Activated CD8-positive, alpha-beta T cell treated with anti-CD3 and anti-CD28 coated beads, Interleukin-2, amount 10 ng/mL, durations not matched to agents 7 days and 5 days (primary cell): ENCODE measurements at regions of chr9 and their contacts with region 1.

Region 1: DNA sequence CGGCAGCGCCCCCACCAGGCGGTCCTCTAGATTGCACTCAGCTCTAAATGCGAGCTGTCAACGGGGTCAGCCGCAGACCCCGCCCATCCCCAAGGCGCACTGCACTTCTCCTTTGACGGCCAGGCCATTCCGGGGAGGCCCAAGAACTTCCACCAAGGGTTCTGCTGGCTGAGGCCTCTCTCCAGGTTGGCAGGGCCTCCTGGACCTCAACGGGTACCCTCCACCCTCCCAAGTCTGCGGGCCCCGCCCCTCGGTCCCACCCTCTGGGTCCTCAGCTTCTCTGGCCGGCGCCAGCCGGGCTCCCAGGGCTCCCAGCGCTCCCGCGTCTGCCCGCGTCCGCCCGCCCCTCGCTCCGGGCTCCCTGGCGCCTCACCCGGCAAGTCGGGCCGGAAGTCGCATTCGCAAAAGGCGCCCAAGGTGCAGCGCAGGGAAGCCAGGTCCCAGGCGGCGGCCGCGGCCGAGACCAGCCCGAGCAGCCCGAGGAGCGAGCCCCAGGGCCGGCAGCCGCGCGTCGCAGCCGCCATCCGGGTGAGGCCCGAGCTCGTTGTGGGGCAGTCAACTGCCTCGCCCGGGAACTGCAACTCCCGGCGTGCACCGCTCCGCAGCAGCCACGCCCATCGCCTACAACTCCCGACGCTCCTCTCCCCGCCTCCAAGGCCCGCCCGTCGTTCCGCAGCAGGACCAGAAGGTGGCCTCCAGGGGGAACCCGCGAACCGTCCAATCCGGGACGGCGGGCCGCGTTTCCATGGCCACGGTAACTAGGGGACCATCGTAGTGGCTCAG is at the start of gene TOR2A:
- DNase-seq: peak; percentile 99
- ATAC-seq: peak; percentile 93
- H3K4me3 Mint-ChIP-seq: peak within 1 kb of the TSS; percentile 73
- H3K27ac Mint-ChIP-seq: peak within 1 kb of the TSS; percentile 86
- H3K4me1 Mint-ChIP-seq: peaks cover 25% of the 10 kb centered on the region
- H3K27me3 Mint-ChIP-seq: no peaks in the 10 kb centered on the region
- total RNA-seq, gene TOR2A: 27.0 to 29.1 TPM

Region 2: GRCh38 chr9:127555768-127556397 is 179.1 kb before region 1 on chr9:
- CTCF ChIA-PET with region 1: interaction called, 11 read pairs
- POLR2A ChIA-PET with region 1: interaction called, 3 read pairs
- DNase-seq: peak; percentile 93
- ATAC-seq: peak; percentile 89
- H3K4me3 Mint-ChIP-seq: peak overlapping the region; percentile 76
- H3K27ac Mint-ChIP-seq: peak overlapping the region; percentile 97
- H3K4me1 Mint-ChIP-seq: peaks cover 88% of the 10 kb centered on the region
- H3K27me3 Mint-ChIP-seq: no peaks in the 10 kb centered on the region

Region 3: GRCh38 chr9:127586537-127586936 is 148.4 kb before region 1 on chr9:
- CTCF ChIA-PET with region 1: interaction called, 51 read pairs
- POLR2A ChIA-PET with region 1: interaction called, 3 read pairs
- DNase-seq: peak; percentile 75
- ATAC-seq: peak; percentile 80
- H3K4me3 Mint-ChIP-seq: no peak overlapping the region
- H3K27ac Mint-ChIP-seq: peak overlapping the region; percentile 39
- H3K4me1 Mint-ChIP-seq: peaks cover 27% of the 10 kb centered on the region
- H3K27me3 Mint-ChIP-seq: peaks cover 12% of the 10 kb centered on the region

Region 4: DNA sequence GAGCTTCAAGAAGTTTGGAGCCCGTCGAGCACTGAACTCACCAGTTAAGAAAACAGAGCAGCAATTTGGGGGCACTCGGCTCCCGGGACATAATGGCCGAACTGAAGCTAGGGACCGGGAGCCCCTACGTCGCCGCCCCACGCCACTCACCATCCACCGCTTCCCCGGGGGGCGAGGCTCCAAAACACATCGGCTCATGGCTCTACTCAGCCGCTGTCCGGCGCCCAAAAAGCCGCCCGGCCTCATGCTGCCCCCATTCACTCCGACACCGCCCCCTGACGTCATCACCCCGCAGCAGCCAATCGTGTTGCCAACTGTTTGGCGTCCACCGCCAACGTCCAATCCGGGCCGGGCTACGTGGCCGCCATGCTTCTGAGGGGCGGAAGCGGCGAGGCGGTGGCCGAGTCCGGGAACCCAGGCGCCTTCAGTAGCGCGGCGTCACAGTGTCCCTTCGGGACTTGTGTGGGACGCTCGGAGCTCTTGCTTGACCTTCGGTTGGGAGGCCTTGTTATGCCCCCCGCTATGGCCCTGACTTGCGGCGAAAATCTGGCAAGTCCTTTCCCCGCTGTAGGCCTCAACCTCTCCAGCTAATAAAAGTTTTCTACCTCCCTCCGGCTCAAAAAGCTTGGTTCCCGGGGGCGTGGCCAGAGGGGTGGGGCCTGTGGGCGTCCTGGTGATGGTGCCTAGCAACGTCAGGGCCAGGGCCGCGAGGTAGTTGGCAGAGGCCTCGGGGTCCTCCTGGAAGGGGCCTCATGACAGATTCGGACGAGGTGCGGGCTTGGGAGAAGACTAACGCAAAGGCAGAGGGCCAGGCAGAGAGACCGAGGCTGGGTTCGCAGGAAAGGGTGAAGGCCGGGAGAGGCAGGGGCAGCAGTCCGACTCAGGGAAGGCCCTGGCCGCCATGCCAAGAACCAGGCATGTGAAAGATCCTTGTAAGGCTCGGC is 19.3 kb before region 1 on chr9 and contains the starts of genes PTRH1 and TTC16:
- CTCF ChIA-PET with region 1: interaction called, 35 read pairs
- POLR2A ChIA-PET with region 1: interaction called, 3 read pairs
- DNase-seq: peak; percentile 98
- ATAC-seq: peak; percentile 95
- H3K4me3 Mint-ChIP-seq: peak within 1 kb of the TSS; percentile 99
- H3K27ac Mint-ChIP-seq: peak within 1 kb of the TSS; percentile 96
- H3K4me1 Mint-ChIP-seq: peaks cover 42% of the 10 kb centered on the region
- H3K27me3 Mint-ChIP-seq: peaks cover 2% of the 10 kb centered on the region
- total RNA-seq, gene PTRH1: 10.2 to 14.1 TPM
- total RNA-seq, gene TTC16: 4.7 to 5.0 TPM

Region 5: GRCh38 chr9:127779136-127779981 is 44.4 kb after region 1 on chr9:
- CTCF ChIA-PET with region 1: interaction called, 59 read pairs
- POLR2A ChIA-PET with region 1: interaction called, 11 read pairs
- DNase-seq: peak; percentile 66
- ATAC-seq: peak; percentile 41
- H3K4me3 Mint-ChIP-seq: peak overlapping the region; percentile 98
- H3K27ac Mint-ChIP-seq: peak overlapping the region; percentile 98
- H3K4me1 Mint-ChIP-seq: peaks cover 69% of the 10 kb centered on the region
- H3K27me3 Mint-ChIP-seq: no peaks in the 10 kb centered on the region

Region 6: GRCh38 chr9:127869310-127870152 is 134.6 kb after region 1 on chr9:
- CTCF ChIA-PET with region 1: interaction called, 53 read pairs
- POLR2A ChIA-PET with region 1: interaction called, 4 read pairs
- DNase-seq: peak; percentile 87
- ATAC-seq: peak; percentile 89
- H3K4me3 Mint-ChIP-seq: no peak overlapping the region
- H3K27ac Mint-ChIP-seq: no peak overlapping the region
- H3K4me1 Mint-ChIP-seq: peaks cover 23% of the 10 kb centered on the region
- H3K27me3 Mint-ChIP-seq: no peaks in the 10 kb centered on the region

Region 7: DNA sequence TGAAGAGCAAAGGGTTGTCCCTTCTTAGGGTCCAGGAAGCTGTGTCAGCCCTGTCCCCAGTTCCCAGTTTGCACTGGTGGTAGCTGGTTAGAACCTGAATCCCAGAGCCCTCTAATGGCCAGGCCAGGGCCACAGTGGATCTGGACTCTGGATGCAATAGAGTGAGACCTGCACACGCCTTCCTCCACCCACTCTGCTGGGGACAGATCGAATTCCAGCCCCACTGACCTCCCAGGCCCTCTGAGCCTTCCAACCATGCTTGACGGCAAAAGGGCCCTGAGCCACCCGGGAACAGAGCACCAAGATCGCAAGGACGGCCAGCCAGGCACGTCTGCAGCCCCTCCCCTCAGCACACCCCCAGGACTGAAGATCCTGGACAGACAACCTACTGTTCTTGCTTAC is 308.5 kb after region 1 on chr9:
- CTCF ChIA-PET with region 1: no interaction called
- POLR2A ChIA-PET with region 1: no interaction called
- DNase-seq: no peak
- ATAC-seq: no peak
- H3K4me3 Mint-ChIP-seq: no peak overlapping the region
- H3K27ac Mint-ChIP-seq: no peak overlapping the region
- H3K4me1 Mint-ChIP-seq: peaks cover 6% of the 10 kb centered on the region
- H3K27me3 Mint-ChIP-seq: peaks cover 6% of the 10 kb centered on the region